ENCODE measurements at regions of chr9 and their contacts with region 1.

Region 1: DNA sequence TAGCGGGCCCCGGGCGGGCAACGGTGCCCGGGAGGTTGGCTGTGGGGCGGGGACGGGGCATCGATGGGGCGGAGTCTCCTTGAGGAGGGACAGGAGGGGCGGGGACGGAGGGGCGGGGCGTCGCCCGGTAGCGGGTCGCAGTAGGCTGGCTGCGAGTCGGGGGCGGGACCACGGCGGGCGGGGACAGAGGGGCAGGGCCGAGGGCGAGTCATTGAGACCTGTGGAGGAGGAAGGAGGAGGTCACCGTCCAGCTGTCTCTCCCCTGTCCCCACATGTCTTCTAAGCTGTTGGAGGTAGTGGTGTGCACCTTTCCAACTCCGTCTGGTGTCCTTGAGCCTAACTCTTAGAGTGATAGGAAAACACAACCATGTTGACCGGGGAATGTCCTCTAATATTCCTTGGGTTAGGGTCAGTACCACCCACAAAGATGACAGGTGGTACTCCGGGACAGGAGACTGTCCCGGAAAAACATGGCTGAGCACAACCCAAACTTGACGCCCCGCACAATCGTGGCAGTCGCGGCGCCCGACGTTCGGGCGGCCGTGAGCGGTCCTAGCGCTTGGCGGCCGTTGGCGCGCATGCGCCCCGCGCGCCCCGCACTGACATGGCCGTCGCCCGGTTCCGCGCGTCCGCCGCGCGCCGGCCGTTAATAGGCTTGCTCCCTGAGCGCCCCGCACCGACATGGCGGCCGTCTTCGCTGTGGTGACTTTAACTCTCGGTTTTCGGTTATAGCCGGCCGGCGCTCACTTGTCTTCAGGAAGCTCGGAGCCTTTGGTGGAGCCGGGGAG is at the starts of genes CRAT and PTPA:
- DNase-seq: peak; percentile 89
- H3K4me3 Mint-ChIP-seq: peak within 1 kb of the TSS; percentile 96
- H3K27ac Mint-ChIP-seq: peak within 1 kb of the TSS; percentile 94
- H3K4me1 Mint-ChIP-seq: peaks cover 36% of the 10 kb centered on the region
- H3K27me3 Mint-ChIP-seq: no peaks in the 10 kb centered on the region
- total RNA-seq, gene CRAT: 9.9 and 10.0 TPM in 2 replicates
- total RNA-seq, gene PTPA: 105 and 114 TPM in 2 replicates

Region 2: DNA sequence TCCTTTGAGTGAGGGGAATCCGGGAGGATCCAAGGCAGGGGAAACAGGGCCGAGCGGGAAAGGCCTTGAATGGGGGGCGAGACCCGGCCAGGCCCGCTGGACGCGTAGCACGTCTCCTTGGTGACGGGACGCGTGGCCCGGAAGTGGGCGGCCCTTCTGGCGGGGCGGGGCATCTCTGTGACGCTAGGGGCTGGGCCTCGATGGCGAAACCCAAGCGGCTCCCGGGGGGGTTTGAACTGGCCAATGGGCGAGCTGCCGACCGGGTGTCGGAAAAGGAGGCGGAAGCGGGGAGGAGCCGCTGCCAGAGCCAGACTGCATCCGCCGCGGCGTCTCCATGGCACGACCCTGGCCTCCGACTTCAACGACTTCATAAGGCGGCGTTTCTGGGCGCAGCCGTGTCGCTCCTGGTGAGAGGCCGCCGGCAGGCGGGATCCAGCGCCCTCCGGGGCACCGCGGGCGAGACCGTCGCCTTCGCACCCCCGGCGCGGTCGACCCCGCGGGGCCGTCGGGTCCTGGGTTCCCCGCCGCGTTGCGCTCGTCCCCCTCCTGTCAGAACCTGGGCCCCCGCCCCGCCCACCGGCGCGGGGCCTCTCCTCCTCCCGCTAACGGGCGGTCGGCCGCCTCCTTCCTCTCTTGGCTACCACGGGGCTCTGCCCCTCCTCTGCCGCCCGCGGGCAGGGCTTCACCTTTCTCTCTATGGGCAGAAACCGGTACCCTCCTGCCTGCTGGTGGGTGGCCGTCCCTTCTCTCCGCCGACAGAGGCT is 654.9 kb before region 1 on chr9 and contains the start of gene ODF2:
- intact Hi-C with region 1: loop called (anchors 1 kb)
- DNase-seq: peak; percentile 98
- H3K4me3 Mint-ChIP-seq: peak within 1 kb of the TSS; percentile 93
- H3K27ac Mint-ChIP-seq: peak within 1 kb of the TSS; percentile 98
- H3K4me1 Mint-ChIP-seq: peaks cover 13% of the 10 kb centered on the region
- H3K27me3 Mint-ChIP-seq: peaks cover 3% of the 10 kb centered on the region
- total RNA-seq, gene ODF2: 55.6 and 57.6 TPM in 2 replicates

Region 3: GRCh38 chr9:129028192-129028957 is 82.6 kb before region 1 on chr9 and contains the start of gene SH3GLB2:
- intact Hi-C with region 1: loop called (anchors 1 kb)
- DNase-seq: peak; percentile 85
- H3K4me3 Mint-ChIP-seq: peak within 1 kb of the TSS; percentile 91
- H3K27ac Mint-ChIP-seq: peak within 1 kb of the TSS; percentile 80
- H3K4me1 Mint-ChIP-seq: peaks cover 24% of the 10 kb centered on the region
- H3K27me3 Mint-ChIP-seq: no peaks in the 10 kb centered on the region
- total RNA-seq, gene SH3GLB2: 71.1 and 74.8 TPM in 2 replicates

Region 4: DNA sequence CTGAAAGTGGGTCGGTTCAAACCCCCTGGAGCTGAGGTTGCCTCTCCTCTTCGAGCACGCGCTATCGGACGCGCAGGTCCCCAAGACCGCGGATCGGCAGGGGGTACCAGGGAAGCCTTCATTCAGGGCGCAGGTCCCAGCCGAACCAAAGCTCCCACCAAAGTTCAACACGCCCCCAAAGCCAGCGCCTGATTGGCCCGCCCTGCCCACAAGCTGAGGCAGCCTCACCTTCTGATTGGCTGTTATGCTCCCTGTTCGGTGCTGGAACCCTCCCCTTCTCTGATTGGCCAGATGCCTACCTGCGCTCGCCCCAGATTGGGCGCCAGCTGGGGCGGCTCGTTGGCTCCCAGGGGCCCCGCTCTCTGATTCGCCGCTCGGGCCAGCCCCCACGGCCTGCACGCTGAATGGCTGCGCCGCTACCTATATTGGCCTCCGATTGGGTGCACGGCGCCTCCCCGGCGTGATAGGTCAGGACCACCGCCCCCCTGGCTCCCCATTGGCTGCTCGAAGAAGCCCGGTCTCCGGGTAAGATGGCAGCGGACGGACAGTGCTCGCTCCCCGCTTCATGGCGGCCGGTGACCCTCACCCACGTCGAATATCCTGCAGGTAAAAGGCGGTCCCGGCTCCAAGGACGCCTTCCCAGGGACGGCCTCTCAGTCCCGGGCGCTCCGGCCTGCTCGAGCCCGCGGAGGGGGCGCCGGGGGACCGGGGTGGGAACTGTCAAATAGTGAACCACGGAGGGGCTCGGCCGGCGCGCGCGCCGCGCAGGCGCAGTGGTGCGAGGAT is 30.1 kb before region 1 on chr9 and contains the start of gene DOLPP1:
- intact Hi-C with region 1: loop called (anchors 1 kb)
- DNase-seq: peak; percentile 99
- H3K4me3 Mint-ChIP-seq: peak within 1 kb of the TSS; percentile 94
- H3K27ac Mint-ChIP-seq: peak within 1 kb of the TSS; percentile 82
- H3K4me1 Mint-ChIP-seq: peaks cover 17% of the 10 kb centered on the region
- H3K27me3 Mint-ChIP-seq: peaks cover 2% of the 10 kb centered on the region
- total RNA-seq, gene DOLPP1: 28.4 and 30.2 TPM in 2 replicates

Region 5: DNA sequence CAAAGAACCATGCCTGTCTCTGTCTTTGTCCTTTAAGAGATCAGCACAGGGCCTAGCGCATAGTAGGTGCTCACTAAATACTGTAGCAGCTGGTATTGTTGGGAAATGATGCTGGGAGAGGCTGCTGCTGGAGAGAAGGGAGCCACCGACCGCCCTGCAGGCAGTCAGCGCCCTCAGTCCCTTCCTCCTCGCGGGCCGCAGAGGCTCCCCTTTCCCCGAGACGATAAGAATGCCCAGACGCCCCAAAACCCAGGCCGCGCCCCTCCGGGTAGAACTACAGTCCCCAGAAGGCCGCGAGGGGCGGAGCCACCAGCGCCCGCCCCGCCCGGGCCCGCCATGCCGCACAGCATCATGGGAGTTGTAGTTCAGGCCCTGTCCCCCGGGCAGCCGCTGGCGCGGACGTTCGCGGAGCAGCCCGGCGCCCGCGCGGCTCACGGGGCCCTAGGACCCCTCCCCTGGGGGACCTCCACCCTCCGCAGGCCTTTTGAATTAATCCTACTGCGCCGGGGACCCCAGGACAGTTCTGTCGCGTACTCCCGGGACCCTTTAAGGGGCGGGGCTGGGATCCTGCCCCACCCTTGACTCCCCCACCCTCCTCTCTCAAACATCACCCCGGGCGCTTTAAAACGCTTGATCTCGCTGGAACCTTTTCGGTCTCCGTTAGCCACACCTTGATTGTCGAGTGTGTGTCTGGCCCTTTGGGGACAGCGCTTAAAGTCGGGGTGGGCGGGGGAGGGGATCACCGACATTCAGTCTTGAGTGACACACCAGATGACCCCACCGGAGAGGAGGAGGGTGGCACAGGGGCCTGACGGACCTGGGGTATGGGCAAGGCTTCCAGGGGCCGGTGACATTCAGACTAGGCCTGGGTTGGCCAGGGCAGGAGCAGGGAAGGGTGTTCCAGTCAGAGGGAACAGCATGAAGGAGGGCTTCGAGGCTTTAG is 92.0 kb after region 1 on chr9:
- intact Hi-C with region 1: loop called (anchors 1 kb)
- DNase-seq: peak; percentile 90
- H3K4me3 Mint-ChIP-seq: peak overlapping the region; percentile 66
- H3K27ac Mint-ChIP-seq: peak overlapping the region; percentile 73
- H3K4me1 Mint-ChIP-seq: peaks cover 6% of the 10 kb centered on the region
- H3K27me3 Mint-ChIP-seq: peaks cover 8% of the 10 kb centered on the region

Measured in activated T-helper 1 cell treated with anti-CD3 and anti-CD28 coated beads, Interleukin-12 subunit alpha, Interleukin-12 subunit beta, Interleukin-2, Interleukin-4 antibody, amounts not matched to agents 30 ng/mL and 10 ng/mL and 1 ng/mL, durations not matched to agents 14 hours and 24 hours and 36 hours (primary cell).